Activated T-helper 1 cell treated with anti-CD3 and anti-CD28 coated beads, Interleukin-12 subunit alpha, Interleukin-12 subunit beta, Interleukin-2, Interleukin-4 antibody, amounts not matched to agents 30 ng/mL and 10 ng/mL and 1 ng/mL, durations not matched to agents 14 hours and 24 hours and 36 hours (primary cell): ENCODE measurements at regions of chr9 and their contacts with region 1.

Region 1: GRCh38 chr9:115204904-115205453 is 87.0 kb upstream of the TNC start:
- DNase-seq: no peak
- H3K4me3 Mint-ChIP-seq: no peak overlapping the region
- H3K27ac Mint-ChIP-seq: no peak overlapping the region
- H3K4me1 Mint-ChIP-seq: peaks cover 50% of the 10 kb centered on the region
- H3K27me3 Mint-ChIP-seq: peaks cover 13% of the 10 kb centered on the region

Region 2: GRCh38 chr9:114487607-114488300 is 717.2 kb before region 1 on chr9:
- intact Hi-C with region 1: loop called (anchors 5 kb)
- DNase-seq: peak; percentile 55
- H3K4me3 Mint-ChIP-seq: no peak overlapping the region
- H3K27ac Mint-ChIP-seq: peak overlapping the region; percentile 20
- H3K4me1 Mint-ChIP-seq: peaks cover 29% of the 10 kb centered on the region
- H3K27me3 Mint-ChIP-seq: no peaks in the 10 kb centered on the region

Region 3: GRCh38 chr9:114691046-114691955 is 513.7 kb before region 1 on chr9:
- intact Hi-C with region 1: loop called (anchors 2 kb)
- DNase-seq: peak; percentile 80
- H3K4me3 Mint-ChIP-seq: peak overlapping the region; percentile 69
- H3K27ac Mint-ChIP-seq: peak overlapping the region; percentile 98
- H3K4me1 Mint-ChIP-seq: peaks cover 93% of the 10 kb centered on the region
- H3K27me3 Mint-ChIP-seq: no peaks in the 10 kb centered on the region

Region 4: DNA sequence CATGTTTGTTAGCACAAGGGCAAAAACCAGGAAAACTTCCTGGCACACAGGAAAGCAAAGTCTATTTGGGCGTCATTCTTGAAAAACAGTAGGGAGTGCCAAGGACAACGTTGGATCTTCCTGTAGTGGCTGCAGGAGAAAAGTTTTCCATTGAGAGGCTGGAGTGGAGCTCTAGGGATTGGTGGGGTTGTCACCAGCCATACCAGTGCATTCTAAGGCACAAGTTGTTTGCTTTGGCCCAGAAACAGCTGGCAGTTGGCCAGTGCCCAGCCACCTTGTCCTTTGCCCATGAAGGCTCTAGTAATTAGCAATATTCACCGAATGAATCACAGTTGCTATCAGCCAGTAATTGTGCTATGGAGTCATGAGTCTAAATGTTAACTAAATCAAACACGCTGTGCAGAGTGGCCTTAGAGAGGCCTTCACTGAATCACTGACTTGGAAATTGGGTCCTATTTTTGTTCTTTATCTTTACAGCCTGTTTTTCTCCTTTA is 425.6 kb before region 1 on chr9:
- intact Hi-C with region 1: loop called (anchors 10 kb)
- DNase-seq: no peak
- H3K4me3 Mint-ChIP-seq: no peak overlapping the region
- H3K27ac Mint-ChIP-seq: no peak overlapping the region
- H3K4me1 Mint-ChIP-seq: peaks cover 32% of the 10 kb centered on the region
- H3K27me3 Mint-ChIP-seq: peaks cover 14% of the 10 kb centered on the region

Region 5: DNA sequence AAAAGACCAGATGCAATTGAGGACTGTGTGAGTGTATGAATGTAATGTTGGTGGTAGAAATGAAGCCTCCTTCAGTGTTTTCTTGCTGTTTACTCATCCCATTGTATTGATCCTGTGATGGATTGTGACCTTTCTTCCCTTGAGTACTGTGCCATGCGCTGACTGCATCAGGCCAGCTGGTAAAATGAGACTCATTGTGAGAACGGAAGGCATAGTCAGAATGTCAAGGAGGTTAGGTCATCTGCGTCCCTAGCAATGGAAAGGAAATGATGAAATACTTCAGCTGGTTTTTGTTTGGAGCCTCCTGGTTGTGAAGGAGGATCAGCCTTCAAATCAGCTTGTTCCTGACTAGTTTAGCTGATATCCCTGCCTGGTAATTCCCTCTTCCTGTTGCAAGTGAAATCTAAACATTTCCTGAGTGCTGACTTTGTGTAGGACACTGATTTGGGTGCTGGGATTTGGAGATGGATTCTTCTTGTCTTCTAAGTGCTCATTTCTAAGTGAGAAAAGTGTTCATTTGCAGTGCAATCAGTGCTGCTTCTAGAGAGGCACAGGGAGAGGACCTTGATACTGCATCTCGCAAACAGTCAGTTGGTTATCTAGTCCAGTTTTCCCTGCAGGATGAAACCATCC is 310.1 kb before region 1 on chr9:
- intact Hi-C with region 1: loop called (anchors 1 kb)
- DNase-seq: peak; percentile 54
- H3K4me3 Mint-ChIP-seq: peak overlapping the region; percentile 16
- H3K27ac Mint-ChIP-seq: peak overlapping the region; percentile 90
- H3K4me1 Mint-ChIP-seq: peaks cover 57% of the 10 kb centered on the region
- H3K27me3 Mint-ChIP-seq: no peaks in the 10 kb centered on the region

Region 6: DNA sequence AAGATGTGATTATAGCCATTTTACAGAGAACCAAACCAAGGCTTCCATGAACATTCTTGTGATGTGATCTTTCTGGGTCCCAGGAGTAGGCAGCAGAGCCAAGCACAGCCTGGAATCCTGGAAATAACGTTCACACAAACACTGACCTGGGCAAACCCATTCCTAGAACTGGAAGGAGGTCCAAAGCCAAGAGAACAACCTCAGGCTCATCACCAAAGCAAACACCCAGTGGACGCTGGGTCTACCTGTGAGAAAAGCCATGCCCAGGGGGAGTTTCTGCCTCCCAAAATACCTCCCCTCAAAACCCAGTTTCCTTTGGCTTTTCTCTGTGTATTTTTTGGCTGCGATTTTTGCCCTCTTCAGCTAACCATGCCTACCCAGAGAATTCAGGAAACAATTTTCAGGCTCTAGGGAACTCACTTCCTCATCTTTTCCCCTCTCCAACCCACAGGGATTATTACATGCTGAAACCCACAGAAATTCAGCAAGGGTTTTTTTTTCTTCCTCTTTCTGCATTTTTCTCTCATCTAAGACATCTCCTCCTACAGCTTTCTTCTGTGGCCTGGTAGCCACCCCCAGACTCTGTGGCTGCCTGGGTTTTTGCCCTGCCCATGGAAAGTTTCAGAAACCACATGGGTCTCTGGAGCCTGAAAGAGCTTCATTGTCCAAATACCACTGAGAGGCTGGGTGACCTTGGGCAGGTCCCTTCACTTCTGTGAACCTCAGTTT is 162.0 kb before region 1 on chr9:
- intact Hi-C with region 1: loop called (anchors 2 kb)
- DNase-seq: peak; percentile 7
- H3K4me3 Mint-ChIP-seq: peak overlapping the region; percentile 1
- H3K27ac Mint-ChIP-seq: peak overlapping the region; percentile 78
- H3K4me1 Mint-ChIP-seq: peaks cover 47% of the 10 kb centered on the region
- H3K27me3 Mint-ChIP-seq: peaks cover 17% of the 10 kb centered on the region

Region 7: GRCh38 chr9:115158661-115159481 is 46.1 kb before region 1 on chr9:
- intact Hi-C with region 1: loop called (anchors 2 kb)
- DNase-seq: no peak
- H3K4me3 Mint-ChIP-seq: no peak overlapping the region
- H3K27ac Mint-ChIP-seq: peak overlapping the region; percentile 4
- H3K4me1 Mint-ChIP-seq: peaks cover 4% of the 10 kb centered on the region
- H3K27me3 Mint-ChIP-seq: peaks cover 6% of the 10 kb centered on the region